ENCODE measurements at regions of chr12 and their contacts with region 1.

Region 1: DNA sequence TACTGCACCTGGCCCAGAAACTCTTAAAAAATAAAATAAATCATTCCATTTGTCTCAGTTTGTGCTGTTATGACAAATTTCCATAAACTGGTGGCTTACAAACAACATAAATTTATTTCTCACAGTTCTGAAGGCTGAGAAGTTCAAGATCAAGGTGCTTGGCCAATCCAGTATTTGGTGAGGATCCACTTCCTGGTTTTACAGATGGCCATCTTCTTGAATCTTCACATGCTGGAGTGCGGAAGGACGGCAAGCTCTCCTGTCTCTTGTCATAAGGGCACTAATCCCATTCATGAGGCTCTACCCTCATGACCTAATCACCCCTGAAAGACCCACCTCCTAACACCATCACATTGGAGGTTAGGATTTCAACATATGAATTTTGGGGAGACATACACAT is 29.9 kb upstream of the MYBPC1 start:
- DNase-seq: no peak
- ATAC-seq: no peak
- H3K4me3 ChIP-seq: no peak overlapping the region
- H3K27ac ChIP-seq: no peak overlapping the region
- H3K4me1 ChIP-seq: no peaks in the 10 kb centered on the region
- H3K27me3 ChIP-seq: no peaks in the 10 kb centered on the region; the same call in 1 of the 2 replicates
- CTCF ChIP-seq: no peak
- POLR2A ChIP-seq: no peak
- RAD21 ChIP-seq: no peak

Region 2: GRCh38 chr12:101830367-101831325 is 265.7 kb after region 1 on chr12 and contains the start of gene GNPTAB:
- CTCF ChIA-PET with region 1: no interaction called
- POLR2A ChIA-PET with region 1: no interaction called
- dilution Hi-C with region 1: no loop called
- in situ Hi-C with region 1: no loop called
- intact Hi-C with region 1: loop called (anchors 10 kb)
- DNase-seq: peak; percentile 88
- ATAC-seq: peak; percentile 99
- H3K4me3 ChIP-seq: peak within 1 kb of the TSS; percentile 97
- H3K27ac ChIP-seq: peak within 1 kb of the TSS; percentile 56
- H3K4me1 ChIP-seq: no peaks in the 10 kb centered on the region
- H3K27me3 ChIP-seq: no peaks in the 10 kb centered on the region
- CTCF ChIP-seq: peak; percentile 94
- POLR2A ChIP-seq: peak; percentile 41; the same call in 1 of the 2 replicates
- RAD21 ChIP-seq: peak; percentile 63
- total RNA-seq, gene GNPTAB: 24.2 and 28.9 TPM in 2 replicates

Region 3: DNA sequence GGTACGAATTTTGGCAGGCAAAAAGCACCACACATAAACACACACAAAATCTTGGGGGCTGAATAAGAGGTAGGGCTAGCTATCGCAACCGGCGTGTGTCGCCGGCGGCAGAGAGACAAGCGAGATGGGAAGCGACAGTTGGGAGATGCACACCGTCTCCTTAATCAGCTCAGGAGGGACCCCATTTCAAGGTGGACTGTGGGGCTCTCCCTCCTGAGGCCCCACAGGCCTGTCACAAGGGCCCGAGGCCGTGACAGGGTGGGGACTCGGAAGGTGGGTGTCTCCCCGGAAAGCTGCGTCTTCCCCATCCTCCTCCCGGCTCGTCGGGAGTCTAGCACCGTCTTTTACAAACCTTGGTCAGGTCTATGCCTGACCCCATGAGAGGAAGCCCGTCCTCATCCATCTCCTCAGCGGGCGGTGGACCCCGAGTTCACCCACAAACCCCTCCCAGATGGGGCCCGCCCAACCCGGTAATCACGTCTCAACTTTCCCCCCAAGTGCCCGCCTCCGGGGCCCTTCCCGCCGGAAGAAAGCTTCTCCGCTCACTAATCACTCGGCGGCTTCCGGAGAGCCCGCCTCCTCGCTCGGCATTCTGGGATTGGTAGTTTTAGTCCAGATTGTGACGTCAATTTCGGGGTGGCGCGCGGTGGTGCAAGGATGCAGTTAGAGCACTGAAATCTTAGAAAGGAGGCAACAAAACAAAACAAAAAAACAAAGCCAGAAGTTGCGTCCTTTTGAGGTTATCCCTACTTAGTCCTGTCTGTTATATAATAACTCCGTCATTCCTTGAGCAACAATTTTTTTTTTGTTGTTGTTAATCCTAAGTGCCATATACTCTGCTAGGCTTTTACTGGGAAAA is 496.9 kb after region 1 on chr12 and contains the start of gene WASHC3:
- CTCF ChIA-PET with region 1: no interaction called
- POLR2A ChIA-PET with region 1: no interaction called
- dilution Hi-C with region 1: no loop called
- in situ Hi-C with region 1: no loop called
- intact Hi-C with region 1: no loop called
- DNase-seq: peak; percentile 88
- ATAC-seq: peak; percentile 99
- H3K4me3 ChIP-seq: peak within 1 kb of the TSS; percentile 79
- H3K27ac ChIP-seq: peak within 1 kb of the TSS; percentile 75
- H3K4me1 ChIP-seq: no peaks in the 10 kb centered on the region
- H3K27me3 ChIP-seq: no peaks in the 10 kb centered on the region
- CTCF ChIP-seq: no peak
- POLR2A ChIP-seq: peak; percentile 60; the same call in 1 of the 2 replicates
- RAD21 ChIP-seq: no peak
- total RNA-seq, gene WASHC3: 82.8 and 87.1 TPM in 2 replicates

Region 4: GRCh38 chr12:102848832-102849231 is 1283.9 kb after region 1 on chr12:
- CTCF ChIA-PET with region 1: no interaction called
- POLR2A ChIA-PET with region 1: no interaction called
- dilution Hi-C with region 1: no loop called
- in situ Hi-C with region 1: no loop called
- intact Hi-C with region 1: no loop called
- DNase-seq: no peak
- ATAC-seq: no peak
- H3K4me3 ChIP-seq: no peak overlapping the region
- H3K27ac ChIP-seq: no peak overlapping the region
- H3K4me1 ChIP-seq: no peaks in the 10 kb centered on the region
- H3K27me3 ChIP-seq: no peaks in the 10 kb centered on the region
- CTCF ChIP-seq: no peak
- POLR2A ChIP-seq: no peak
- RAD21 ChIP-seq: no peak

Region 5: DNA sequence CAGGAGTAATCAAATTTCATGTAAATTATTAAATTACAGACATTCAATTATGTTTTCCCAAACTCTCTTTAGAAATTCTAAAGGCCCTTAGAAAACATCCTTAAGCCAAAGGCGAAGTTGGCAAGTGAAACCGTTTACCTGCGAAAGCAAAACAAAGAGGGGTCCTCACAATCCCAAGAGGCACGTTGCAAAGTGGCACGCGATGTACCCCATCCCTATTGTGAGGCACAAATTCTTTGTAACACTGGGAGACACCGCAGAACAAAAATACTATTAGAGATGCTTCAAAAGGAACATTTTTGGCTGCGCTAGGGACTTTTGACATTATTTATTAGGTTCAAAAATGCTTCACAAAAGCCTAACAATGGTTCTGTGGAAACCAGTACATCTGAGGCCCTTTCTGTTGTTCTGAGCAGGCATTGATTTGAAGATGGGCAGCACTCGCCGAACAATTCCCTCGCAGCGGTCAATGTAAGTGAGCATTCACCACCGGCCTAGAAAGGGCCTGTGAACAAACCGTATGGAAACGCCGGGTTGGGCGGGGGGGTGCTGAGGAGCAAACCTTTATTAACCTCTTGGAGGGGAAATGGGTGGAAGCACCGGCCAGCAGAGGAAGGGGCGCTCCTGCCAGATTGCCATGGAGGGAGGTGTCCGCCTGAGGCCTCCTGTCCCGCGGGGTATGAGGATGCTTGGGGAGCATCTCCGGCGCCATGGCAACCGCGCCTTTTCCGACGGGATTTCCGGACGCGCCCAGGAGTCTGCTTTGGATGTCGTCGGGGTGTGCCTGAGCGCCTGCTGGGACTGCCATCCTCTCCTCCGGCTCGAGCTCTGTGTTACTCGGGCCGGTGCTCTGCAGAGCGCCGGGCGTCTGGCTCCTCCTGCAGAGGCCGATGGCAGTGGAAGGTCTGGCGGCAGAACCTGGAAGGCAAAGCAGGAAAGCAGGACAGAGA is 1737.0 kb after region 1 on chr12:
- CTCF ChIA-PET with region 1: no interaction called
- POLR2A ChIA-PET with region 1: no interaction called
- dilution Hi-C with region 1: no loop called
- in situ Hi-C with region 1: no loop called
- intact Hi-C with region 1: loop called (anchors 5 kb)
- DNase-seq: no peak
- ATAC-seq: no peak
- H3K4me3 ChIP-seq: no peak overlapping the region
- H3K27ac ChIP-seq: no peak overlapping the region
- H3K4me1 ChIP-seq: no peaks in the 10 kb centered on the region
- H3K27me3 ChIP-seq: no peaks in the 10 kb centered on the region
- CTCF ChIP-seq: no peak
- POLR2A ChIP-seq: no peak
- RAD21 ChIP-seq: no peak